ENCODE measurements at regions of chr5 and their contacts with region 1.

Region 1: DNA sequence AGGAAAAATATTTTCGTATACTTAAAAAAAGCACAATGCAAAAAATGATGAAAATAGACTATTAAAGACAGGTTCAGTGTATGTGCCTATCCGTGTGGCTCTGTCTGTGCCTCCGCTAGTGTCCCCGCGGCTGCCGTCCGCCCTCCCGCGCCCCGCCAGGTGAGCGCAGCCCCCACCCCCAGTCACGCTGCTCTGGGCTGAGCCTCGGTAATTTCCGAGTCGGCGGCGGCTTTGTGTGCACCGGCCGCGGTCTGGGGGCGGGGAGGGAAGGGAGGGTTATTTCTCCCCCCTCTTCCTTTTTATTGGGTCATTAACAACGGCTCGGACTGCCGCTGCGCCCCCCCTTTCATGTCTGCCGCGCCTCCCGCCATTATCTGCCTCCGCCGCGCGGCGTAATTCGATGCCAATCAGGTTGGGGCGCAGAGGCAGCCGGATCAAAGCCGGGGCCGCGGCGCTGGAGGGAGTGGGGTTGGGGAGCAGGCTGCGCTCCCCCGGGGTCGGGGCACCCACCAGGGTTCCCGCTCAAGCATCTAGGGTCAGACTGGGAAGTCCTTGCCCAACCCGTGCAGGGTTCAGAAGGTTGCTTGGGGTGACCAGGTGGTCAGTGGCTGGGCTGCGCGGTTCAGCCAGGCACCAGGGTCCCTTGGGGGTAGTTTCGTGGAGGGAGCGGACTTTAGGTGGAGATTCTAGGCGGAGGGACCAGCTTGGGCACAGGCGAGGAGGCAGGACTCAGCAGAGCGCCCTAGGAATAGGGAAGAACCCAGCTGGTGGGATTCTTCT is 39.5 kb upstream of the PSD2 start:
- DNase-seq: peak; percentile 49
- ATAC-seq: peak; percentile 72
- H3K4me3 Mint-ChIP-seq: peak overlapping the region; percentile 62
- H3K27ac Mint-ChIP-seq: no peak overlapping the region
- H3K4me1 Mint-ChIP-seq: peaks cover 60% of the 10 kb centered on the region
- H3K27me3 Mint-ChIP-seq: peaks cover 10% of the 10 kb centered on the region
- CTCF ChIP-seq: no peak

Region 2: DNA sequence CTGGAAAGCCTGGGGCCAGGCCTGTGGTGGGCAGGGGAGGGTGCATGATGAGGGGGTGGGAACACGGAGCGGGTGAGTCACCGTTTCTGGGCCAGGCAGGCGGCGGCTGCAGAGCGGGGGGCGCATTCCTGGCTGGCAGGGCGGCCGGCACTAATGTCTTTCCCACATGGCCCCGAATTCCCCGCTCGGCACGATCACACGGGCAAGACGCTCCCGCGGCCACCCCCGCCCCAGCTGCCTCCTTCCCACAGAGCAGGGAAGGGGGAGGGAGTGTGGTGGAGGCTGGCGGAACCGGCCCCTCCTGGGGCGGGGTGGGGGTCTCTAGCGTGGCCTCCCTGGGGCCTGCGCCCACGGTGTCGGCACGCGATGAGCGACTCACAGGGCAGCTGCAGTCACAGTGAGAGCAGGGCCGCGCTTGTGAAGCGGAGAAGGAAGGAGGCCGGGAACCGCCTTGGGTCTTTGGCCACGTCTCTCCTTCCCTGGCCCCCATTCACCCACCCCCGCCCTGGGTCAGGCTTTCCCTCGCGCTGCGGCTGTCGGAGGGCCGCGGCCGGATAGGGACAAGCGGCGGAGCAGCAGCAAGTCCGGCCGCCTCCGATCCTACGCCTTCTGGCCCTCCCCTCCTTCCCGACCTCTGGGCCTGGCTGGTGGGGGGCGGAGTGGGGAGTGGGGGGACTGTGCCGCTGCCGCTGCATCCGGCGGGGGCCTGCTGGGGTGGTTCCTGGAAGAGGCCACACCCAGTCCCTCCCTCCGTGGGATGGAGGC is 59.0 kb before region 1 on chr5:
- CTCF ChIA-PET with region 1: no interaction called
- POLR2A ChIA-PET with region 1: interaction called, 12 read pairs
- intact Hi-C with region 1: no loop called
- DNase-seq: no peak
- ATAC-seq: peak; percentile 45
- H3K4me3 Mint-ChIP-seq: peak overlapping the region; percentile 78
- H3K27ac Mint-ChIP-seq: peak overlapping the region; percentile 61
- H3K4me1 Mint-ChIP-seq: peaks cover 53% of the 10 kb centered on the region
- H3K27me3 Mint-ChIP-seq: peaks cover 15% of the 10 kb centered on the region
- CTCF ChIP-seq: no peak

Region 3: DNA sequence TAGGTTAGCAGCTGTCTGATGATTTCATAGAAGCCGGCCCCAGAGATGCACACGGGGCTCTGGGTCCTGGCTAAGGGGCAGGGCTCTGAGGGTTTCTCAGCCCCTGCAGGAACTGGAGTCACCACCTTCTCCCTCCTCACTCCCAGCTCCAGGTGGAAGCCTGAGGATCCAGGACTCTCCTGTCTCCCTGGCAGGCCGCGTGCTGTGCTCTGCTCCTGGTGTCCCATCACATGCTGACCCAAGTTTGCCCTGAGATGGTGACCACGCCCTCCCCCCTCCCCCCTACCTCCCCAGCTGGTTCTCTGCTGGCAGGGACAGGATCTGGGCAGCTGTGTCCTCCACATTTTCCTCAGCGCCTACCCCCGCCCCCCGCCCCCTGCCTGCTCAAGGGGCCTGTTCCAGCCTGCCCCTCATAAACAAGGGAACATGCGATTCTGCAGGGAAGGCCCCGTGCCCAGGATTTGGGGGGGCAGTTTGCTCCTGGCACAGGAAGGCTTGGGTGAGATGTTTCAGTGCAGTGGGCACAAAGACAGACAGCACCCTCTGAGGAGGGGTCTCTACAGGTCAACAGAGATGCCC is 127.0 kb after region 1 on chr5:
- CTCF ChIA-PET with region 1: no interaction called
- POLR2A ChIA-PET with region 1: no interaction called
- intact Hi-C with region 1: no loop called
- DNase-seq: no peak
- ATAC-seq: no peak
- H3K4me3 Mint-ChIP-seq: no peak overlapping the region
- H3K27ac Mint-ChIP-seq: no peak overlapping the region
- H3K4me1 Mint-ChIP-seq: peaks cover 4% of the 10 kb centered on the region
- H3K27me3 Mint-ChIP-seq: peaks cover 16% of the 10 kb centered on the region
- CTCF ChIP-seq: no peak

Region 4: GRCh38 chr5:140966293-140967225 is 1210.5 kb after region 1 on chr5 and contains the start of gene PCDHAC2:
- CTCF ChIA-PET with region 1: no interaction called
- POLR2A ChIA-PET with region 1: no interaction called
- intact Hi-C with region 1: no loop called
- DNase-seq: no peak
- ATAC-seq: no peak
- H3K4me3 Mint-ChIP-seq: no peak within 1 kb of the TSS
- H3K27ac Mint-ChIP-seq: no peak within 1 kb of the TSS
- H3K4me1 Mint-ChIP-seq: no peaks in the 10 kb centered on the region
- H3K27me3 Mint-ChIP-seq: peaks cover 24% of the 10 kb centered on the region
- CTCF ChIP-seq: no peak
- total RNA-seq, gene PCDHAC2: not detected in 2 replicates

Measured in activated B cell treated with CpG ODN at 0.5 μM for 24 hours (primary cell).